ENCODE measurements at regions of chr10 and their contacts with region 1.

Region 1: DNA sequence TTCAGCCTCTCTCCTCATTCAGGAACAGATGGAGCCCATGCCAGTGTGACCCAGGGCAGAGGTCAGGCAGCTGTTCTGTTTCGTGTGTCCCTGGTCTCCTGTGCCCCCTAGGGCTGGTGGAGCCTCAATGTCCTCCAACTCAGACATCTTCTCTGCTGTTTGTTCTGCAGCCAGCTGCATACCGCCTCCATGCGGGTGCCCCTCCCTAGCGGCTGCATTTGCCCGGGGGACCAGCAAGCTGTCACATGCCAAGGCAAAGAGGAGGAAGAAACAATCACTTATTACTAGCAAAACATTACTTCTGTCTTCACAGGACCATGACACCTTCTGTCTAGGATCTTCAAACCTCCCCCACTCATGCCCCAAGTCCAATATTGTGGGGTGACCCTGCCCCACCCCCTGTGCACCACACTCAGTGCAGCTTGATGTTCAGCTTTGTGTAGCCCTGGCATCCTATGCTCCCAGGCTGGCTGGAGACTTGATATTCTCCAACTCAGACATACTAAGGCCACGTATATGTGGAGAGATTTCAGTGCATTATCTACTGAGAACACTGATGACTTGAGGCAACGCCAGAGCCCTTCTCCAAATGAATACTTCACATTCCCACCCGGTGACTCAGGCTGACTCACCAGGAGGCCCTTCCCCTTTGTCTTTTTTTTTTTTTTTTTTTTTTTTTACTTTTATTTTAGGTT is 188.9 kb downstream of the SKIDA1 start:
- DNase-seq: peak; percentile 81 to 85
- H3K4me3 ChIP-seq: peak overlapping the region; percentile 8; the same call in 1 of the 2 replicates
- H3K27ac ChIP-seq: peak overlapping the region; percentile 92
- H3K4me1 ChIP-seq: peaks cover 54% of the 10 kb centered on the region
- H3K27me3 ChIP-seq: no peaks in the 10 kb centered on the region
- CTCF ChIP-seq: no peak

Region 2: DNA sequence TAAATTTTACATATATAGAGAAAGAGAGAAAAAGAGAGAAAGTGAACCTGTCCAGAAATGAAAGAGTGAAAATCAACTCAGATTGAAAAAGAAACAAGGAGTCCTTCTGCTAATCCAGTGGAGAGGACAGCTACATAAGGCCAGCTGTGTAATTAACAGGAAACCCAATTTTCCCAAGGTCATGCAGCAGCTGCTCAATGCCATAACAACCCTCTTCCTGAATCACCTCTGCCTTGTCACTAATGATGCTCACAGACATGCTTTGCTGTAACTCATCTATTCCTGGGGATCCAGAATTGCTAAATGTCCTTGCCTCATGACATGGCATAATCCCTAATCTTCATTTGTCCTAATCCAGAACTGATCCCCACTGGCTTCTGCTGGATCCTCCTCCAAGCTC is 728.1 kb before region 1 on chr10:
- CTCF ChIA-PET with region 1: no interaction called
- POLR2A ChIA-PET with region 1: no interaction called
- intact Hi-C with region 1: no loop called
- DNase-seq: no peak
- H3K4me3 ChIP-seq: no peak overlapping the region
- H3K27ac ChIP-seq: no peak overlapping the region
- H3K4me1 ChIP-seq: no peaks in the 10 kb centered on the region
- H3K27me3 ChIP-seq: no peaks in the 10 kb centered on the region
- CTCF ChIP-seq: no peak

Region 3: DNA sequence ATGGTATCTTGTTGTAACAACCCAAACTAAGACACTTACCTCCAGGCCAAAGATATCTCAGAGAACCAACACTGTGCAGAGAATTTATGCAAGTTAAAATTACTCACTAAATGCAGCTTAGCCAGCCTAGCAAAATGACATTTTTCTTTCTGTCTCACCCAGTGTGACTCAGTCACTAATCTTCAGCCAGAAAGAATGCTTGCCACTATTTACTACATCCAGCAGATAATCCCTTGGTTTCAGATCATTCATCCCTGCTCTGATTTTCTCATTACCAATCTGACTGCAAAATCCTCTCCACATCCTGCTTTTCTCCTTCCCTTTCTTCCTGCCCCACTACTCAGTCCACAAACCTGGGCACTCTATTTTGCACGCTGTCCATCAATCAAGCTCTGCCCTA is 346.0 kb before region 1 on chr10:
- CTCF ChIA-PET with region 1: no interaction called
- POLR2A ChIA-PET with region 1: interaction called, 19 read pairs
- intact Hi-C with region 1: no loop called
- DNase-seq: peak in 1 of 2 experiments; percentile 72
- H3K4me3 ChIP-seq: no peak overlapping the region
- H3K27ac ChIP-seq: no peak overlapping the region
- H3K4me1 ChIP-seq: peaks cover 35% of the 10 kb centered on the region
- H3K27me3 ChIP-seq: no peaks in the 10 kb centered on the region
- CTCF ChIP-seq: no peak

Region 4: GRCh38 chr10:21278491-21279239 is 58.0 kb before region 1 on chr10:
- CTCF ChIA-PET with region 1: interaction called, 5 read pairs
- POLR2A ChIA-PET with region 1: interaction called, 6 read pairs
- intact Hi-C with region 1: loop called (anchors 1 kb)
- DNase-seq: peak; percentile 71 to 90
- H3K4me3 ChIP-seq: no peak overlapping the region
- H3K27ac ChIP-seq: 0 out of 2 replicates have a peak overlapping the region, but pooled peaks have one; percentile 25
- H3K4me1 ChIP-seq: peaks cover 19% of the 10 kb centered on the region
- H3K27me3 ChIP-seq: no peaks in the 10 kb centered on the region
- CTCF ChIP-seq: peak; percentile 89

Region 5: DNA sequence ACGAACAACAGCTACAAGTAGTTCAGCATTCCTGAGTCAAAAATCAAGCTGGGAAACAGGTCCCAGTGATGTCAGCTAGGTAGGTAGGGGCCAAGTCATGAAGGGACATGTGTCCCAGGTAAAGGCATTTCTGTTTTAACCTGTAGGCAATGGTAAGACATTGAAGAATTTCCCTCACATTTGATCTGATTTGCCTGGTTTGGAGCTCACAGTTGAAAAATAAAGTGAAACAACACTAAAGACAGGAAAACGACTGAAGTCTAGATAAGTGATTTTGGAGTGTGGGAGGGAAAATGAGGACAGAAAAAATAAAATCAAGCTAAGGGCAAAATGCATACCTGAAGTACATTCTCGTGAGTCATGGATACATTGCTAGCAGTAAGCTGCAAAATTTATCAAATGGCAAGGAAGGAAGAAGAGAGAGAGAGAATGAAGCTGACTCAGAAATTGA is 19.0 kb after region 1 on chr10:
- CTCF ChIA-PET with region 1: no interaction called
- POLR2A ChIA-PET with region 1: interaction called, 7 read pairs
- intact Hi-C with region 1: loop called (anchors 2 kb)
- DNase-seq: peak; percentile 23 to 68
- H3K4me3 ChIP-seq: no peak overlapping the region
- H3K27ac ChIP-seq: peak overlapping the region; percentile 69
- H3K4me1 ChIP-seq: peaks cover 37% of the 10 kb centered on the region
- H3K27me3 ChIP-seq: no peaks in the 10 kb centered on the region
- CTCF ChIP-seq: no peak

Region 6: GRCh38 chr10:21432271-21432670 is 95.6 kb after region 1 on chr10:
- CTCF ChIA-PET with region 1: no interaction called
- POLR2A ChIA-PET with region 1: no interaction called
- intact Hi-C with region 1: no loop called
- DNase-seq: peak; percentile 57 to 81
- H3K4me3 ChIP-seq: no peak overlapping the region
- H3K27ac ChIP-seq: peak overlapping the region; percentile 82
- H3K4me1 ChIP-seq: peaks cover 22% of the 10 kb centered on the region
- H3K27me3 ChIP-seq: no peaks in the 10 kb centered on the region
- CTCF ChIP-seq: no peak

Region 7: DNA sequence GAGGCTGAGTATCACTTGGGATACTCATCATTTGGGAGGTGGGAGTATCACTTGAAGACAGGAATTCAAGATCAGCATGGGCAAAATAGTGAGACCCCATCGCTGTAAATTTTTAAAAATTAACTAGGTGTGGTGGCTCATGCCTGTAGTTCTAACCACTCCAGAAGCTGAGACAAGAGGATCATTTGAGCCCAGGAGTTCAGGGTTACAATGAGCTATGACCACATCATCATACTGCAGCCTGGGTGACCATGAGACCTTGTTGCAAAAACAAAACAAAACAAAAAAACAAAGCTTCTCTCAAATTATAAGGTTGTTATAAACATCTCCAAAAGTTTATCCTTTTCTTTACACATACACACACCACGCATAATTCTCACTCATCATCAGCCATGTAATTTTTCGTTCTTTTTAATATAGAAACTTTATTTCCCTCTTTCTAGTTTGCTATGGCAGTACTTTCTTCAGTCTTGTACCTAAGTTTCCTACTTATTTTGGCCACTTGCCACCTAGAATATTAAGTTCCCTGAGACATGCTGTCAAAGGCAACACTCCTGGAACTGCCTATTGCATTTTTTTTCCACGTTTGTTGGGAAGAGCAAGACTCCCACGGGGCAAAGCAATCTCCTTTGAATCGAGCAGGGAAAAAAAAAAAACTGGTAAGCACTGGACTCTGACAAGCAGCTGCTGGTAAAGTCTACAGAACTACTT is 151.8 kb after region 1 on chr10:
- CTCF ChIA-PET with region 1: no interaction called
- POLR2A ChIA-PET with region 1: interaction called, 12 read pairs
- intact Hi-C with region 1: no loop called
- DNase-seq: no peak
- H3K4me3 ChIP-seq: no peak overlapping the region
- H3K27ac ChIP-seq: no peak overlapping the region
- H3K4me1 ChIP-seq: no peaks in the 10 kb centered on the region
- H3K27me3 ChIP-seq: no peaks in the 10 kb centered on the region
- CTCF ChIP-seq: no peak

Region 8: DNA sequence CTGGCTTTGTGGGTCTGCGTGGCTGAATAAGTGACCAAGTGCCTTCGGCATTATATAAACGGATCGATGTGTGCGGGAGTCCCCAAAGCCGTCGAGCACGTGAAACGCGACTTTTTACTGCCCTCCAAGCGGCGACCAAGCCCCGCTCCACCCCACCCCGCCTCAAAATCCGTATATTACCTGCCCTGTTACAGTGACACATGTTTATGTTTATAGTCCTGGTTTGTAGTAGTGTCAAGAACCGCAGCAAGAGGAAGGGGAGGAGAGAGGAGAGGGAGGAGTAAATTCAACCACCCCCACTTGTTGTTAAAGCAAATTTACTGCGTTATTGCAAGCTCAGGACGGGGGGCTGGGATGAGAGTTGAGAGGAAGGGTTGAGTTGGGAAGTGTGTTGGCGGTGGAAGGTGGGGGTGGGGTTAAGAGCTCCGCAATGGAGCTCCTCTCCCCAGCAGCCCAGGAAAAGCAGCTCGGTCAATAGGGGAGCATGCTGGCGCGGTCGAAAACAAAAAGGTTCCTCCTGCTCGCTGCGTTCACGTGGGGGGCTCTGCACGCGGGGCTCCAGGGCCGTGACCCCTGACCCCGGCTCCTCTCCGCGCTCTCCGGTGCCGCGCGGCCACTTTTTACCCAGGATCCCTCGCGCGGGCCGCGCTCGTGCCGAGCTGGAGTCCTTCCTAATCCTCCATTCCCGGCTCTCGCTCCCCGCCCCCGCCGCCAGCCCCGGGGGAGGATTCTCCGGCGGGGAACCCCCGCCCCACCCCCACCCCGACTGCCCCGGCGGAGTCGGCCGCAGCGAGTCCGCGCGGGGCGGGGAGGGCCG is 189.0 kb after region 1 on chr10 and contains the start of gene SKIDA1:
- CTCF ChIA-PET with region 1: no interaction called
- POLR2A ChIA-PET with region 1: interaction called, 35 read pairs
- intact Hi-C with region 1: no loop called
- DNase-seq: peak; percentile 85
- H3K4me3 ChIP-seq: peak within 1 kb of the TSS; percentile 71
- H3K27ac ChIP-seq: peak within 1 kb of the TSS; percentile 79
- H3K4me1 ChIP-seq: peaks cover 32% of the 10 kb centered on the region
- H3K27me3 ChIP-seq: no peaks in the 10 kb centered on the region
- CTCF ChIP-seq: no peak
- total RNA-seq, gene SKIDA1: 0.65 and 1.1 TPM in 2 replicates